GM23248 (cell line): ENCODE measurements at regions of chr1 and their contacts with region 1.

Region 1: DNA sequence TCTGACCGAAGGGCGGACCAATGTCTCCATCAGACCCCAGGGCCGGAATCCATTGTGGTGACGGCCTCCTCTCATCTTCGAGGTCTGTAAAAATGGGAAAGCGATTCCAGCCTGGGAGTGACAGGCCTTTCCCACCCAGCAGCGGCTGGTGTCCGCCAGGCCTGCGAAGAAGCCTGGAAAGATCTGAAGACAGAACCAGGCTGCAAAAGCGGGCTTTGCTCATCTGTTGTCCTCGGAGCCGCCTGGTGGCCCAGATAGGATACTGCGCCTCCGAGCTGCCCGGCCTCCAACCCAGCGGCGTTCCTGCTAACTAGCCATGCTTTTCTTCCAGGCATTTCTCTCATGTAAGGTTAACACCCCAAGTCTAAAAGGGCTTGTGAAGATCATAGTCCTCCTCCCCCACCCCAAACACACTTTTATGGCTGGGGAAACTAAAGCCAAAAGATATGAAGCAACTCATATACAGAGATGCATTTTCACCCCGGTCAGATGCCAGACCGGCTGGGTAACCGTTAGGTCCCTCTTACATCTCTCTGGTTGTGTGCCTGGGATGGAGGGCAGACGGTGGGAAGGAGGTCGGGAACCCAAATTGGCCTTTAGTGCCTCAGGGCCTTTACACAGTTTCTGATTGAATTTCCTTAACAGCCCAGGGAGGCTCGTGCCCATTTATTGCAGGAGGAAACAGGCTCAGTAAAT is 1.9 kb upstream of the DHRS3 start:
- DNase-seq: peak; percentile 97
- H3K4me3 ChIP-seq: peak overlapping the region; percentile 82
- H3K27ac ChIP-seq: peak overlapping the region; percentile 82
- H3K4me1 ChIP-seq: peaks cover 19% of the 10 kb centered on the region
- H3K27me3 ChIP-seq: no peaks in the 10 kb centered on the region

Region 2: DNA sequence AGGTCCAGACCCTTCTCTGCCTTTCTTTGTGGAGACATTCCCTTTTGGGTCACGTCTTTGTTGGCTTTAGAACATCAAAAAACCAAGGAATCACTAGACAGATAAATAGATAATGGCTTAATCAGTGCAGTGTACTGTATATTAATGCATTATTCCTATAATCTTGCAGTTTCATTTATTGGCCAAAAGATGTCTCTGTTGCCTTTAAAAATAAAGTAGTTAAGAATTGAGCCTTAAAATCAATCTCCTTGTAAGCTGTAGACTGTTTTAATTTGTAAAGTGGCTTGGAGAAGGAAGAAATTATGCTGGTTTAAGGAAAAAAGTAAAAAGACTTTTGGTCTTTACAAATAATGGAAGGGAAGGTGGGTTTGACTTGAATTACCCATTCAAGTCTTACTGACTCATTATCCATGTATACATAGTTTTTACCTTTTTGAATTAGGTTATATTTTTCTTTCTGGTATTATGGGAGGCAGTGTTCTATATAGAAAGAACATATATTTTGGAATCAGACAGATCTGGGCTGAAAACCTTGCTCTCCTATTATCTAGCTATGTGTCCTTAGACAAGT is 305.5 kb before region 1 on chr1:
- in situ Hi-C with region 1: loop called (anchors 10 kb)
- DNase-seq: peak; percentile 56
- H3K4me3 ChIP-seq: no peak overlapping the region
- H3K27ac ChIP-seq: no peak overlapping the region
- H3K4me1 ChIP-seq: peaks cover 16% of the 10 kb centered on the region
- H3K27me3 ChIP-seq: no peaks in the 10 kb centered on the region

Region 3: GRCh38 chr1:12407050-12407961 is 212.6 kb before region 1 on chr1:
- in situ Hi-C with region 1: loop called (anchors 10 kb)
- DNase-seq: peak; percentile 85
- H3K4me3 ChIP-seq: no peak overlapping the region
- H3K27ac ChIP-seq: peak overlapping the region; percentile 65
- H3K4me1 ChIP-seq: peaks cover 20% of the 10 kb centered on the region
- H3K27me3 ChIP-seq: no peaks in the 10 kb centered on the region